Sigmoid colon (tissue), 7 donors: ENCODE measurements at regions of chr9 and their contacts with region 1.

Region 1: GRCh38 chr9:21326526-21327139 is 8.6 kb downstream of the KLHL9 start:
- DNase-seq: no peak
- H3K4me3 ChIP-seq: no peak overlapping the region
- H3K27ac ChIP-seq: no peak overlapping the region
- H3K4me1 ChIP-seq: peaks cover 0 to 62% (median 35%) of the 10 kb centered on the region in 4 donors
- H3K27me3 ChIP-seq: no peaks in the 10 kb centered on the region
- CTCF ChIP-seq: peak; percentile 28 to 59 (median 34)
- EP300 ChIP-seq: no peak
- POLR2A ChIP-seq: no peak

Region 2: GRCh38 chr9:21395778-21396717 is 69.4 kb after region 1 on chr9:
- intact Hi-C with region 1: loop called (anchors 2 kb)
- DNase-seq: peak; percentile 73
- H3K4me3 ChIP-seq: peak overlapping the region; percentile 31 to 55 (median 50)
- H3K27ac ChIP-seq: no peak overlapping the region
- H3K4me1 ChIP-seq: peaks cover 0 to 9% (median 4%) of the 10 kb centered on the region in 4 donors
- H3K27me3 ChIP-seq: peaks cover 0 to 14% (median under 1%) of the 10 kb centered on the region in 3 donors
- CTCF ChIP-seq: peak; percentile 30 to 74 (median 59)
- EP300 ChIP-seq: no peak
- POLR2A ChIP-seq: no peak

Region 3: DNA sequence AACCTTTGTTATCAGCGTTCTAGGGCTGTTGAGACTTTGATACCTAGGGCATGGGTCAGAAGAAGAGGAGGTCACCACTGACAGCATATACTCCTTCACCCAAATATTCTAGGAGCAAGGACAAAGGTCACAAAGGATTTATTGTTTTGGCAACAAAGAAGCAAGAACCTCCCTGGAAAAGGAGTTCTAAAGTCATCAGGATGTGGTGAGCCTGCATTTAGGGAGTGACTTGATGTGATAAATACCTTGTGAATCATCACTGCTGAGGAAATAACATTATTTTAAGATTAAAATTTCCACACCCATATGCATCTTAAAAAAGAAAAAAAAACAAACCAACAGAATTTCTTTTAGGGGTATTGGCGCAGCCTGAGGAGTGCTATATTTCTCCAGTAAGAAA is 127.5 kb after region 1 on chr9:
- intact Hi-C with region 1: loop called (anchors 5 kb)
- DNase-seq: no peak
- H3K4me3 ChIP-seq: no peak overlapping the region
- H3K27ac ChIP-seq: no peak overlapping the region
- H3K4me1 ChIP-seq: peaks cover 0 to 12% (median 6%) of the 10 kb centered on the region in 4 donors
- H3K27me3 ChIP-seq: no peaks in the 10 kb centered on the region
- CTCF ChIP-seq: no peak
- EP300 ChIP-seq: no peak
- POLR2A ChIP-seq: no peak